Tibial artery (tissue), 4 donors: ENCODE measurements at regions of chr6 and their contacts with region 1.

Region 1: GRCh38 chr6:76495909-76496308 is 423.4 kb upstream of the IMPG1 start:
- DNase-seq: no peak
- H3K4me3 ChIP-seq: no peak overlapping the region
- H3K27ac ChIP-seq: no peak overlapping the region
- H3K4me1 ChIP-seq: no peaks in the 10 kb centered on the region
- H3K27me3 ChIP-seq: no peaks in the 10 kb centered on the region
- CTCF ChIP-seq: no peak

Region 2: GRCh38 chr6:76453270-76453669 is 42.6 kb before region 1 on chr6:
- intact Hi-C with region 1: no loop called
- DNase-seq: peak in 1 of 2 donors; percentile 56
- H3K4me3 ChIP-seq: no peak overlapping the region
- H3K27ac ChIP-seq: no peak overlapping the region
- H3K4me1 ChIP-seq: no peaks in the 10 kb centered on the region
- H3K27me3 ChIP-seq: no peaks in the 10 kb centered on the region
- CTCF ChIP-seq: no peak

Region 3: GRCh38 chr6:78157606-78158005 is 1661.7 kb after region 1 on chr6:
- intact Hi-C with region 1: loop called (anchors 5 kb)
- DNase-seq: no peak
- H3K4me3 ChIP-seq: no peak overlapping the region
- H3K27ac ChIP-seq: no peak overlapping the region
- H3K4me1 ChIP-seq: no peaks in the 10 kb centered on the region
- H3K27me3 ChIP-seq: no peaks in the 10 kb centered on the region
- CTCF ChIP-seq: no peak